Dorsolateral prefrontal cortex (tissue), 120 donors: ENCODE measurements at regions of chr12 and their contacts with region 1.

Region 1: GRCh38 chr12:2429032-2429431 is 365.7 kb upstream of the FKBP4 start:
- DNase-seq: peak in 1 of 10 donors; percentile 20
- H3K4me3 ChIP-seq: no peak overlapping the region
- H3K27ac ChIP-seq: no peak overlapping the region
- H3K27me3 ChIP-seq: no peaks in the 10 kb centered on the region
- CTCF ChIP-seq: no peak

Region 2: GRCh38 chr12:2580821-2581220 is 151.8 kb after region 1 on chr12:
- intact Hi-C with region 1: no loop called
- DNase-seq: no peak
- H3K4me3 ChIP-seq: no peak overlapping the region
- H3K27ac ChIP-seq: no peak overlapping the region
- H3K27me3 ChIP-seq: no peaks in the 10 kb centered on the region
- CTCF ChIP-seq: no peak

Region 3: DNA sequence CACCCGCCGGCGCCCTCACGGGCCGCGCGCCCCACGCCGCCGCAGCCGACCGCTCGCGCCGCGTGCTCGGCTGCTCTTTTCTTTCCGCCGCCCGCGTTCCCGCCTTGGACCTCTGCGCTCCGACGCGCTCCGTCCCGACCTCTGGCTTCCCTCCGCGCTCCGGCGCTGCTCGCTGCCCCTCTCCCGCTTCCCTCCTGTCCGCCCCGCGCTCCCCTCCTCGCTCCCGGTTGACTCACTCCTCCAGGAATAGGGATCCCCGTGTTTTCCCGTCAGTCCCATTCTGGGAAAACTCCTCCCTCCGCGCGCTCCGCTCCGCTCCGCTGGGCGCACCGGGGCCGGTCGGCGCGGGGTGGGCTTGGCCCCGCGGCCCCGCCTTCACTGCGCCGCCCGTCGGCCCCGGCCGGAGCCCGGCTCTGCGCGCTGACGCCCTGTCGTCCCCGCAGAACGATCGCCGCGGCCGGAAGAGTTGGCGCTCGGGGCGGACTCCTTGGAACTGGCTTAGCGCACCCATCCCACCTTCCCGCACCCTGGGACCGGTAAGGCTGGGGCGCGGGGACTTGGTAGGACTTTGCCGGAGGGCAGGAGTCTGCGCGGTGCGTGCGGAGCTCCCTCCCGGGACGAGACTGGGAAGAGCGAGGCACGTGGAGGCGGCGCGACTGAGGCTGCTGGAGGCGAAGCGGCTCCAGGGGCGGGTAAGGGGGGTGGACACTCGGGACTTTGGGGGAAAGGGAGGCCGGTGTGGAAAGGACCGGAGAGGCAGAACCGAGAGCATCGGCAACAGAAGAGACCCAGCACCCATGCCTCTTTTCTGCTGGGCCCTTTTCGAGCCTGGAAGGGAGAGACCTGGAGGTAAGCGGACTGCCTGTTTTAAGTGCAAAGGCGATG is 530.7 kb after region 1 on chr12:
- intact Hi-C with region 1: loop called in 1 of 2 experiments (anchors 10 kb)
- DNase-seq: peak in 4 of 10 donors; percentile 37 to 60 (median 45)
- H3K4me3 ChIP-seq: peak overlapping the region; percentile 28 to 74 (median 55)
- H3K27ac ChIP-seq: peak overlapping the region in 9 of 59 donors; percentile 3 to 65 (median 28)
- H3K27me3 ChIP-seq: peaks cover 0 to 71% (median 25%) of the 10 kb centered on the region in 45 donors
- CTCF ChIP-seq: no peak